IMR-90 (cell line): ENCODE measurements at regions of chr9 and their contacts with region 1.

Region 1: DNA sequence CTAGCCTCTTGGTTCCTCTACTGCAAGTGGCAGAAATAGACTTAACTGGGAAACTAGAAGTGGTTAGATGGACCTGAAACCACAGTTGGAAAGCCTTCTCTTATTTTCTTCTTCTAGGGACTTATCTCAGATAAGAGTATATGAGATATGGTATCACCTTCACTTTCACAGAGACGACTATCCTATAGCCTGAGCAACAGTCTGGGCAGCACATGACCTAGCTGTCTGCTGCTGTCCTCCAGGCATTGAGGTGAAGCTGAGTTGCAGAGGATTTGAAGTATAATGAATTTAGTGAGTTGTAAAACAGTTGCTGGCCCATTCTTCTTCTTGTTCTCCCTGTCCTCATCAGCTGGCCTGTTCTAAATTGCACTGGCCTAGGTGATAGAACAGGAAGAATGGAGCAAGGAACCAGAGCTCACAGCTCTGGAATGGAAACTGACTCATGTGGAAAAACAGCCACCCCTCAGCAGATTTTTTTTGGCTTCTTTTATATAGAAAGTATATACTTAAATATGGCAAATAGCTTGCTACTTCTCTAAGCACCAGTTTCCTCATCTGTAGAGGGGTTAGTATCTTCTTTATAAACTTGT is 27.8 kb downstream of the RECK start:
- DNase-seq: peak; percentile 63
- ATAC-seq: peak; percentile 74
- H3K4me3 ChIP-seq: no peak overlapping the region
- H3K27ac ChIP-seq: peak overlapping the region; percentile 82
- H3K4me1 ChIP-seq: peaks cover 11% of the 10 kb centered on the region
- H3K27me3 ChIP-seq: no peaks in the 10 kb centered on the region
- CTCF ChIP-seq: no peak
- POLR2A ChIP-seq: no peak
- RAD21 ChIP-seq: no peak

Region 2: GRCh38 chr9:36036780-36037548 is 27.6 kb before region 1 on chr9 and contains the start of gene RECK:
- CTCF ChIA-PET with region 1: no interaction called
- POLR2A ChIA-PET with region 1: no interaction called
- dilution Hi-C with region 1: no loop called
- in situ Hi-C with region 1: no loop called
- intact Hi-C with region 1: loop called (anchors 2 kb)
- DNase-seq: peak; percentile 84
- ATAC-seq: peak; percentile 90
- H3K4me3 ChIP-seq: peak within 1 kb of the TSS; percentile 97
- H3K27ac ChIP-seq: peak within 1 kb of the TSS; percentile 98
- H3K4me1 ChIP-seq: peaks cover 12% of the 10 kb centered on the region
- H3K27me3 ChIP-seq: no peaks in the 10 kb centered on the region
- CTCF ChIP-seq: no peak
- POLR2A ChIP-seq: peak; percentile 78
- RAD21 ChIP-seq: no peak
- total RNA-seq, gene RECK: 23.5 and 27.2 TPM in 2 replicates